ENCODE measurements at regions of chr4 and their contacts with region 1.

Region 1: GRCh38 chr4:139651282-139652194 is 14.1 kb upstream of the MGST2 start:
- DNase-seq: no peak
- H3K4me3 ChIP-seq: peak overlapping the region in 3 of 4 donors; percentile 24 to 34 (median 26)
- H3K27ac ChIP-seq: no peak overlapping the region
- H3K4me1 ChIP-seq: peaks cover 0 to 16% (median 12%) of the 10 kb centered on the region in 4 donors
- H3K27me3 ChIP-seq: no peaks in the 10 kb centered on the region
- CTCF ChIP-seq: peak; percentile 92
- EP300 ChIP-seq: no peak
- POLR2A ChIP-seq: no peak

Region 2: DNA sequence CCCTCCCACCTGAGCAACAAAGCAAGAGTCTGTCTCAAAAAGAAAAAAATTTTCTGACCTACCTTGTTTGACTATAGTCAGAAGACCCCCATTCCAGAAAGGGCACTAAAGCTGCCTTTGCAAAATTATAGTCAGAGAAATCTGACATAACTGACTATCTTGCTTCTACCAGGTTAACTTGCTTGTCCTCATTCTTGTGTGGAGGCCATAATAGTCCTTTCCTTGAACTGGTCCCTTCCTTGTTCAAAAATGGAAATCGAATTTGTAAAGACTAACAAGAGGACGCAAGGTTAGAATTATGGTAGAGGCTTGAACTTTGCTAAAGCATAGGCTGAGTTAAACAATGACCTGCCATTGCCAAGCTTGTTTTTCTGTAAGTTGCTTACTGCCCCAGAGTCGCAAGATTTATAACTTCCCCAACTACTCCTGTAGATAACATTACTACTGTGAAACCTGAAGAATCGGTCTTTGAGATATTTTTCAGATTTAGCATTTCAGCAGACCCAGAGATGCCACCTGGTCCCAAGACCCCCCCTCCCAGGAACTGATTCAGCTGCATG is 152.4 kb before region 1 on chr4:
- intact Hi-C with region 1: loop called (anchors 5 kb)
- DNase-seq: no peak
- H3K4me3 ChIP-seq: no peak overlapping the region
- H3K27ac ChIP-seq: no peak overlapping the region
- H3K4me1 ChIP-seq: peaks cover 0 to 12% (median 11%) of the 10 kb centered on the region in 4 donors
- H3K27me3 ChIP-seq: no peaks in the 10 kb centered on the region
- CTCF ChIP-seq: no peak
- EP300 ChIP-seq: no peak
- POLR2A ChIP-seq: no peak

Region 3: GRCh38 chr4:139603576-139604387 is 47.8 kb before region 1 on chr4:
- intact Hi-C with region 1: loop called (anchors 5 kb)
- DNase-seq: no peak
- H3K4me3 ChIP-seq: no peak overlapping the region
- H3K27ac ChIP-seq: no peak overlapping the region
- H3K4me1 ChIP-seq: peaks cover 0 to 8% (median 0%) of the 10 kb centered on the region in 4 donors
- H3K27me3 ChIP-seq: no peaks in the 10 kb centered on the region
- CTCF ChIP-seq: peak; percentile 54 to 69 (median 56)
- EP300 ChIP-seq: no peak
- POLR2A ChIP-seq: no peak

Region 4: DNA sequence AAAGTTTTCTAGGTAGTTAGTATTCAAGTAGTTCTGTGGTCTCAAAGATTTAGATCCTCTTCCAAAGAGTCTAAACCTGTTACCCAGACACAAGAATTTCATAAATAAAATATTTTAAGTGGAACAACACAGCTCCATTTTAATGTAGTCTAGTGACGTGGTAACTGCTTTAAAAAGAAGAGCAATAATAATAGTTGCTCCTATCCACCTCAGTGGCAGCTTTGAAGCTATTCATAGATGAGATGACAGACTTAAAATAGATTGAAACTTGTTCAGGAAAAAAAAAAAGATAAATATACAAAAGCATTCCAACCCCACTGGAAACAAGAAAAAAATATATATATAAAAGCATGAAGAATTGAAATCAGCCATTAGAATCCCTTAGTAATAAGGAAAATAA is 736.5 kb after region 1 on chr4:
- intact Hi-C with region 1: no loop called
- DNase-seq: no peak
- H3K4me3 ChIP-seq: no peak overlapping the region
- H3K27ac ChIP-seq: no peak overlapping the region
- H3K4me1 ChIP-seq: no peaks in the 10 kb centered on the region
- H3K27me3 ChIP-seq: no peaks in the 10 kb centered on the region
- CTCF ChIP-seq: no peak
- EP300 ChIP-seq: no peak
- POLR2A ChIP-seq: no peak

Measured in esophagus muscularis mucosa (tissue), 4 donors.